ENCODE measurements at regions of chr2 and their contacts with region 1.

Region 1: DNA sequence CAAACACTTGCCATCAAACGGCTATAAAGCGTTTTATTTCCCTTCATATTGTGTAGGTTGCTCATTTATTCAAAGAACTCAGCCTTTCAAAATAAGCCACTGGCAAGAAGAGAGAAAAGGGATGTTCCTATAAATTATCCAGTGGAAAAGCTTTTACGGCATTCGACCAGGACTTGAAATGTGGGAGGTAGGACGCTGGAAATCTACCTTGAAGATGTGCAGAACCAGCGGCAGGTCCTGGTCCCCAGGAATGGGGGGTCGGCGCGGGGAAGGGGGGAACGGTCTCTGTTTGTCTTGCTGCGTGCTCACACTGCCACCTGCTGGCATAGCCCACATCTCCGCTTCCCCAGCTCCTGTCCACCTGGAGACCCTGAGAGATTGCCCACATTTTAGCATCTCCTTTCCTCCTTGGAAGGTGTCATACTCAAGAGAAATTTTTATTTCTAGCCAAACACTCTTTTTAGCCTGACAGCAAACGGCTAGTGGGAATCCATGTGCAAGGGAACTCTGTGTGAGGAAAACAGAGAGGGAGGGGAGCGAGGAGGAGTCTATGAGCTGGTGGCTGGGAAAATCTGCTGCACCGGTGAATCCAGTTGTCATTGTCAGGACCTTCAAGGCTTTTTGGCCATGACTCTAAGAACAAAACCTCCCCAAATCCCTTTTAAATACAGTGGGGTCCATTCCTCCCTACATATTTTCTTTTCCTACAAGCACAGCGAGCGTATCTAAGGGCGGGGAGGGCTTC is 349.0 kb upstream of the PKDCC start:
- DNase-seq: no peak
- ATAC-seq: peak; percentile 72
- H3K4me3 ChIP-seq: no peak overlapping the region
- H3K27ac ChIP-seq: no peak overlapping the region
- H3K4me1 ChIP-seq: no peaks in the 10 kb centered on the region
- H3K27me3 ChIP-seq: peaks cover 4% of the 10 kb centered on the region; the same call in 1 of the 2 replicates
- CTCF ChIP-seq: peak in 2 of 3 experiments; percentile 74 to 77; a peak in 4 of 6 replicates
- POLR2A ChIP-seq: no peak
- RAD21 ChIP-seq: peak; percentile 55

Region 2: GRCh38 chr2:40244675-40245074 is 1454.2 kb before region 1 on chr2:
- CTCF ChIA-PET with region 1: no interaction called
- POLR2A ChIA-PET with region 1: no interaction called
- RAD21 ChIA-PET with region 1: no interaction called
- intact Hi-C with region 1: loop called (anchors 10 kb)
- DNase-seq: peak; percentile 33
- ATAC-seq: peak; percentile 98
- H3K4me3 ChIP-seq: no peak overlapping the region
- H3K27ac ChIP-seq: no peak overlapping the region
- H3K4me1 ChIP-seq: no peaks in the 10 kb centered on the region
- H3K27me3 ChIP-seq: 0 out of 2 replicates have a peak, but pooled peaks cover 5% of the 10 kb centered on the region
- CTCF ChIP-seq: peak; percentile 42 to 60 (median 59); a peak in 5 of 6 replicates
- POLR2A ChIP-seq: no peak
- RAD21 ChIP-seq: peak; percentile 57

Region 3: GRCh38 chr2:41414486-41415230 is 284.2 kb before region 1 on chr2:
- CTCF ChIA-PET with region 1: interaction called, 19 read pairs
- POLR2A ChIA-PET with region 1: no interaction called
- RAD21 ChIA-PET with region 1: no interaction called
- intact Hi-C with region 1: loop called (anchors 2 kb)
- DNase-seq: no peak
- ATAC-seq: peak; percentile 47; the same call in 1 of the 2 replicates
- H3K4me3 ChIP-seq: no peak overlapping the region
- H3K27ac ChIP-seq: no peak overlapping the region
- H3K4me1 ChIP-seq: no peaks in the 10 kb centered on the region
- H3K27me3 ChIP-seq: no peaks in the 10 kb centered on the region
- CTCF ChIP-seq: peak; percentile 20 to 57 (median 49); a peak in 4 of 6 replicates
- POLR2A ChIP-seq: no peak
- RAD21 ChIP-seq: peak; percentile 33; the same call in 1 of the 2 replicates